CD4-positive, alpha-beta memory T cell (primary cell): ENCODE measurements at regions of chr10 and their contacts with region 1.

Region 1: GRCh38 chr10:86376852-86377796 is 10.5 kb upstream of the GRID1 start:
- DNase-seq: peak; percentile 62 to 82 (median 73)
- H3K4me3 ChIP-seq: no peak overlapping the region
- H3K4me3 Mint-ChIP-seq: peak overlapping the region in 2 of 8 donors; percentile 31 to 43
- H3K27ac ChIP-seq: no peak overlapping the region
- H3K27ac Mint-ChIP-seq: no peak overlapping the region
- H3K4me1 ChIP-seq: peaks cover 4% of the 10 kb centered on the region
- H3K4me1 Mint-ChIP-seq: peaks cover 0 to 1% (median 0%) of the 10 kb centered on the region in 4 donors
- H3K27me3 ChIP-seq: peaks cover 12% of the 10 kb centered on the region
- H3K27me3 Mint-ChIP-seq: peaks cover 15 to 22% of the 10 kb centered on the region in 2 donors

Region 2: GRCh38 chr10:84925495-84925894 is 1451.6 kb before region 1 on chr10:
- CTCF ChIA-PET with region 1: no interaction called
- POLR2A ChIA-PET with region 1: no interaction called
- intact Hi-C with region 1: loop called (anchors 5 kb)
- DNase-seq: no peak
- H3K4me3 ChIP-seq: no peak overlapping the region
- H3K4me3 Mint-ChIP-seq: no peak overlapping the region
- H3K27ac ChIP-seq: no peak overlapping the region
- H3K27ac Mint-ChIP-seq: no peak overlapping the region
- H3K4me1 ChIP-seq: no peaks in the 10 kb centered on the region
- H3K4me1 Mint-ChIP-seq: no peaks in the 10 kb centered on the region
- H3K27me3 ChIP-seq: no peaks in the 10 kb centered on the region
- H3K27me3 Mint-ChIP-seq: peaks cover 0 to 1% of the 10 kb centered on the region in 2 donors

Region 3: DNA sequence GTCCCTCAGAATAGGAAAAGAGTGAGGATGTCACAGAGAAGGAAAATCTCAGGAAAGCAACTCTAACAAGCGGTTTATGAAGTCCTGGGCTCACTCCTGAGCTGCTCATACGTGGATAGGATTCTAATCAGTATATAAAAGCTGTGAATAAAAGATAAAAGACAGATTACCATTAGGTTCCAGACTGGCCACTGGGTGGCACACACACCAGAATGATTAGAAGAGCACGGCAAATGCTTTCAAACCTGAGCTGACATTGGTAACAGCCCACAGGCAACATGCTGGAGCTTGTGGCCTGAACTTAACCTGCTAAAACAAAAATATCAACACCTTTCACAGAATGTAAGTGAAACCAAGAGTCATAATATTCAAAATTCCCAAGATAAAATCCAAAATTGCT is 381.3 kb before region 1 on chr10:
- CTCF ChIA-PET with region 1: interaction called, 6 read pairs
- POLR2A ChIA-PET with region 1: no interaction called
- intact Hi-C with region 1: loop called (anchors 10 kb)
- DNase-seq: peak in 1 of 5 donors; percentile 11
- H3K4me3 ChIP-seq: no peak overlapping the region
- H3K4me3 Mint-ChIP-seq: no peak overlapping the region
- H3K27ac ChIP-seq: no peak overlapping the region
- H3K27ac Mint-ChIP-seq: no peak overlapping the region
- H3K4me1 ChIP-seq: no peaks in the 10 kb centered on the region
- H3K4me1 Mint-ChIP-seq: no peaks in the 10 kb centered on the region
- H3K27me3 ChIP-seq: no peaks in the 10 kb centered on the region
- H3K27me3 Mint-ChIP-seq: peaks cover 1 to 4% of the 10 kb centered on the region in 2 donors